Mammary epithelial cell (primary cell): ENCODE measurements at regions of chr6 and their contacts with region 1.

Region 1: DNA sequence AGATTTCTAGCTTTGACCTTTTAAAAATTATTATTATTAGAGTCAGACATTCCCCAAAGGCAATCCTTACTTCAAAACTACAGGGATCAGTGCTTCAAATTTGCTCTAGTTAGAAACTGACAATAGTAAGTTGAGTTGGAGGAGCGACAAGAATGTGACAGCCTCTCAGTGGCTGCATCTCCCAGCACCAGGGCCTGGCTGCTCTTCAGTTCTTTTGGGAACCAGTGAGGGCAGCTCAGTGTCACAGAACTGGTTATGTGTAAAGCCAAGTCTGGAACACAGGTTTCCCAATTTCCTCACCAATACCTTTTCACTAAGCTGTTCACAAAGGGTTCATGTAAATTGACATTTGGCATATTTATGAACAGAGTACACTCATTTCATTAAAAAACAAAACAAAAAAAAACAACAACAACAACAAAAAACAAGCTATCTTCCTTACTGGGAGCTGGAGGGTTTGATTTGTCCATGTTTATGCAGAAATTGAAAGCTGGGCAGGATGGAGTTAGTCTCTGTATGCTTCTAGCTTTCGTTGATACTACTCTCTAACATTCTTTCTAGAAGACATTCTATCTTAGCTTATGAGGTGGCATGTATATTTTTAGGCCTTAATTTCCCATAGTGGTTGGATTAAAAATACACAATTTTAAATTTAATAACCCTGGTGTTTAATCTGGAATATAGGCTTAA is 95.0 kb downstream of the SAMD5 start:
- DNase-seq: no peak
- H3K4me3 ChIP-seq: no peak overlapping the region
- H3K27ac ChIP-seq: no peak overlapping the region
- H3K4me1 ChIP-seq: no peaks in the 10 kb centered on the region
- H3K27me3 ChIP-seq: no peaks in the 10 kb centered on the region
- CTCF ChIP-seq: no peak

Region 2: DNA sequence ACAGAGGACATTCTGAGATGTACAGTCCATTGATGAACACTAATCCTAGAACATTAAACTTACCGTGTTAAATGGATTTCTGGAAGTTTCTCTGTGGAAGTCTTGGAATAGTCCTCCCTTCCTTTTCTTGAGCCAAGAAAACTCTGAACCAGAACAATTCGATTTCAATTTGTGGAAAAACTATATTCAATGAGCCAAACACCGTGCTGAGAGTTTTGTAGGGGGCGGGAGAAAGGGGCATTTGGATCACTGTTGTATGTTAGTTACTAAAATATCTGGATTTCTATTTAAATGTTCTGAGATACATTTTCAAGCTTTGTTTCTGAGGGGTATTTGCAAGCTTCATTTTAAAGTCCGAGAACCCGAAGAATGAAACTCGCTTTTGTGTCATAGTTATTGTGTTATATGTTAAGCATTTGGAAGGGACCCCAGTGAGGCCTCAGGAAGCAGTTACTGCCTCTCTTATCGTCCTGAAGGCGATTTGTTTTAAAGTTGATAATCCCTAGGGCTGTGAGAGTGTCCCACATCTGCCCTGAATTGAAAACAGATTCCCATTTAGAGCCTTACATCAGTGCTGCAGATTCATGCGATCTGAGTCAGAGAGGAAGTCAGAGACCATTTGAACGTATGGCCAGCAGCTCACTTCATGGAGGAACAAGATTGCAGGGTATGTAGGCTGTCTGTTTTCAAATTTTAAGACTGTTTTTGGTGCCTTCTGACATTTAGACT is 668.3 kb after region 1 on chr6:
- CTCF ChIA-PET with region 1: interaction called, 10 read pairs
- dilution Hi-C with region 1: no loop called
- in situ Hi-C with region 1: no loop called
- intact Hi-C with region 1: no loop called
- DNase-seq: peak; percentile 19
- H3K4me3 ChIP-seq: no peak overlapping the region
- H3K27ac ChIP-seq: no peak overlapping the region
- H3K4me1 ChIP-seq: peaks cover 11% of the 10 kb centered on the region
- H3K27me3 ChIP-seq: no peaks in the 10 kb centered on the region
- CTCF ChIP-seq: no peak